ENCODE measurements at regions of chr15 and their contacts with region 1.

Region 1: GRCh38 chr15:22980189-22981050 is at the start of gene CYFIP1:
- DNase-seq: peak; percentile 61
- ATAC-seq: peak; percentile 87
- H3K4me3 ChIP-seq: peak within 1 kb of the TSS; percentile 91 to 95
- H3K27ac ChIP-seq: peak within 1 kb of the TSS; percentile 93
- H3K4me1 ChIP-seq: peaks cover 15 to 23% of the 10 kb centered on the region in 2 experiments
- H3K27me3 ChIP-seq: no peaks in the 10 kb centered on the region
- CTCF ChIP-seq: no peak
- POLR2A ChIP-seq: no peak
- RAD21 ChIP-seq: no peak
- total RNA-seq, gene CYFIP1: 143 TPM

Region 2: GRCh38 chr15:22895469-22896190 is 84.8 kb before region 1 on chr15:
- CTCF ChIA-PET with region 1: no interaction called
- POLR2A ChIA-PET with region 1: no interaction called
- RAD21 ChIA-PET with region 1: no interaction called
- intact Hi-C with region 1: loop called (anchors 5 kb)
- DNase-seq: peak; percentile 77
- ATAC-seq: peak; percentile 95
- H3K4me3 ChIP-seq: no peak overlapping the region; a peak in 1 of 4 replicates
- H3K27ac ChIP-seq: peak overlapping the region; percentile 54
- H3K4me1 ChIP-seq: peaks cover 14 to 23% of the 10 kb centered on the region in 2 experiments
- H3K27me3 ChIP-seq: no peaks in the 10 kb centered on the region
- CTCF ChIP-seq: no peak
- POLR2A ChIP-seq: no peak
- RAD21 ChIP-seq: no peak

Measured in HCT116 (cell line).